ENCODE measurements at regions of chr11 and their contacts with region 1.

Region 1: GRCh38 chr11:64947208-64947814 is 11.6 kb upstream of the GPHA2 start:
- DNase-seq: no peak
- H3K4me3 ChIP-seq: no peak overlapping the region
- H3K27ac ChIP-seq: no peak overlapping the region
- H3K4me1 ChIP-seq: no peaks in the 10 kb centered on the region
- H3K27me3 ChIP-seq: peaks cover 0 to 18% (median 0%) of the 10 kb centered on the region in 5 experiments

Region 2: GRCh38 chr11:64358907-64359711 is 588.2 kb before region 1 on chr11 and contains the start of gene RPS6KA4:
- CTCF ChIA-PET with region 1: no interaction called
- POLR2A ChIA-PET with region 1: no interaction called
- DNase-seq: peak in 2 of 3 donors; percentile 48 to 63
- H3K4me3 ChIP-seq: peak within 1 kb of the TSS; percentile 52 to 86 (median 75)
- H3K27ac ChIP-seq: peak within 1 kb of the TSS in 1 of 2 experiments; percentile 70
- H3K4me1 ChIP-seq: peaks cover 2 to 82% (median 51%) of the 10 kb centered on the region in 4 experiments
- H3K27me3 ChIP-seq: no peaks in the 10 kb centered on the region

Region 3: DNA sequence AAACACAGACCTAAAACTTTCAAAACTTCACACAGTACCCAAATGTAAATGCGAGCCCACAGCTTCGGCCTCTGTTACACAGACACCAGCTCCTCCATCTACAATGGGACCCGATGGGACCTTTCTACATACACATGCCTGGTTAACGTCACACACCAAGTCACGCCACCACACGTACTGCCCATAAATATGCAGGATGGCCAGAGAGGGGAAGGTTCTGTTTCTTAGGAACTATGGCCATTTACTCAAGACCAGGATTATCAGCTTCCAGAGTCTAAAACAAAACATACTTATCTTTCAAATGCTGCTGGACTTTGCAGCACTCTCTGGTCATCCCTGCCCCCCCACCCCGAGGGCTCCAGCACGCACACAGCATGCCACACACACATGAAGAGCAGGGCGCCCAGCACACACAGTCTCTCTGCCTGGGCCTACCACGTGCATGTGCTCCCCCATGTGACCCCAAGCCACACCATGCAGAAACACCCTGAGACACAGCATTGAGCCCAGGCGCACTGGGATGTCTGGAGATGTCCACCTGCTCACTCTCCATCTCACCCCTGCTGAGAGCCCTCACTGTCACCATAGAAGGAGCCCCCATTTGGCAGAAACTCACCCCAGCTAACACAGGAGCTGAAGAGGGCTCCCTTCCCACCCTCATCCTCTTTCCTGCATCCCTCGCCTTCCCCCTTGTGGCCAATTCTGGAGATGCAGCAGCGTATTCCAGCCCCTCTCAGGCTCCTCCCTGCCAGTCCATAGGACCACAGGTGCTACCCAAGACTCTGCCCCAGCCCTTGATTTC is 294.5 kb before region 1 on chr11:
- CTCF ChIA-PET with region 1: no interaction called
- POLR2A ChIA-PET with region 1: no interaction called
- DNase-seq: peak; percentile 71 to 77 (median 76)
- H3K4me3 ChIP-seq: no peak overlapping the region
- H3K27ac ChIP-seq: no peak overlapping the region
- H3K4me1 ChIP-seq: peaks cover 0 to 55% (median 45%) of the 10 kb centered on the region in 4 experiments
- H3K27me3 ChIP-seq: no peaks in the 10 kb centered on the region

Region 4: DNA sequence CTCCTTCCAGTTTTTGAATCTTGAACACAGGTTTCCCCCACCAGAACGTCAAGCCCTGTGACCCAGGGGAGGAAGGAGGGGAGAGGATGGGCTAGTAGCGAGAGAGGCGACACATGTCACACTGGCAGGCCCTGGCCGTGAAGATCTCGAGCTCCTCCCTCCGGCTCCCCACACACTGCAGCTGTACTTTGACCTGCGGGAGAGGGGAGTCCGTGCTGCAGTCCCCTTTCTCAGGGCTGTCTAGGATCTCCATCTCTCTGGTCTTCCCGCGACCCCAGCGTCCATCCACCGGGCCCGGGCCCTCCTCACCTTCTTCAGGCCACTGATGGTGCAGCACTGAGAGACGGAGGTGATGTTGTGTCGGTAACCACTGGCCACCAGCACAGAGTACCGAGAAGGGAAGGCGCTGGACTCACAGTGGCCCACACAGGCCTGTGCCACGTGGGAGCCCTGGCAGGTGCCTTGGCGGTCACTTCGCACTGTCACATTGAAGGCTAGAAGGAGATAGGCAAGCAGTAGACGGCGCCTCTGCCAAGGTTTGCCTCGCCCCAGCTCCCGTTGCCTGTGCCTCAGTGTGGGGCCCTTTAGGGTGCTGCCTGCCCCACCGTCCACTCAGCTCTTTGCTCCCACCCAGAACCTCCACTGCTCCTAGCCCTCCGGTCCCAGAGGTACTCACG is 12.5 kb before region 1 on chr11:
- CTCF ChIA-PET with region 1: interaction called, 10 read pairs
- POLR2A ChIA-PET with region 1: no interaction called
- DNase-seq: no peak
- H3K4me3 ChIP-seq: no peak overlapping the region
- H3K27ac ChIP-seq: no peak overlapping the region
- H3K4me1 ChIP-seq: no peaks in the 10 kb centered on the region
- H3K27me3 ChIP-seq: peaks cover 0 to 4% (median 0%) of the 10 kb centered on the region in 5 experiments

Region 5: GRCh38 chr11:65078151-65078550 is 130.8 kb after region 1 on chr11:
- CTCF ChIA-PET with region 1: no interaction called
- POLR2A ChIA-PET with region 1: no interaction called
- DNase-seq: peak; percentile 73 to 86 (median 78)
- H3K4me3 ChIP-seq: no peak overlapping the region
- H3K27ac ChIP-seq: peak overlapping the region; percentile 12 to 50
- H3K4me1 ChIP-seq: peaks cover 3 to 20% (median 8%) of the 10 kb centered on the region in 4 experiments
- H3K27me3 ChIP-seq: no peaks in the 10 kb centered on the region